ENCODE measurements at regions of chr6 and their contacts with region 1.

Region 1: DNA sequence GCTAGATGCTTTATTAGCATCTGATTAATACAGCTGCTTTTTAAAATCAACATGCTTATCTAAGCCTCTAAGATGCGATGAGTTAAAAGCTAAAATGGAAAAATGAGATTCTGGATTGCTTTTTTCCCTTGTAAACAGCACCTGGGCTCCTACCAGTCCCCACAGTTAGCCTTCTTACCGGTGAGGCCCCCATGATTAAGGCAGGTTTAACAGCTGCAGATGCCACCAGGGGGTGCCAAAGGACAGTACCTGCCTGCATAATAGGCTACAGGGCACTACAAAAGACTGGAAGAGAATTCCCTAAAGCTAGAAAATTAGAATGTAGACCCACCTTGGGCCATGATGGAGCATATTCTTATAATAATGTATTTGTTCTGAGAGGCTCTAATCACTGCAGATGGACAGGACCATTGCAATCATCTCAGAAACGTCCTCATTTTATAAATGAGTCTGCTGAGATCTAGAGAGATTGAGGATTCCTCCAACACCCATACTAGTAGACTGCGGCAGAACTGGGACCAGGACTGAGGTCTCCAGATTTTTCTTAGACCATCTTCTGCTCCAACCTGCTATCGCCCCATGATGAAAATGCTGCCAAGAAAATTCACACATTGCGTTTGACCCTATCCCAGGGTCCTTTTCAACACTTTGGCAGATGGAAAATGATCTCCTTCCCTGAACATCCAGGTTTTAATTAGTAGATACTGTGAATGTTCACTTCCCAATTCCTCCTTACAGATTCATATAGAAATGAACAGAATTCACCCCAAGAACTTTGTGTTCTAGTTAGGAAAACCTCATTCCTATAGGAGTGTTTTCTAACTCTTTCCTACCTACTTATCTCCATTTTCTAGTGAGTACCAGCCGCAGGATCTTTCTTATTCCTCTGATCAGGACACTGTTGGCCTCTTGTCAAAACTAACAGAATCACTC is 148.8 kb downstream of the RPS12 start:
- DNase-seq: no peak
- ATAC-seq: peak; percentile 97
- H3K4me3 ChIP-seq: no peak overlapping the region
- H3K27ac ChIP-seq: no peak overlapping the region
- H3K4me1 ChIP-seq: no peaks in the 10 kb centered on the region; the same call in 1 of the 2 replicates
- H3K27me3 ChIP-seq: no peaks in the 10 kb centered on the region
- CTCF ChIP-seq: peak; percentile 71 to 82 (median 73)
- EP300 ChIP-seq: no peak
- POLR2A ChIP-seq: no peak
- RAD21 ChIP-seq: peak; percentile 76

Region 2: GRCh38 chr6:132830334-132830751 is 132.9 kb before region 1 on chr6:
- CTCF ChIA-PET with region 1: interaction called, 44 read pairs
- POLR2A ChIA-PET with region 1: no interaction called
- RAD21 ChIA-PET with region 1: interaction called, 14 read pairs
- SMC1A ChIA-PET with region 1: interaction called, 15 read pairs
- in situ Hi-C with region 1: loop called (anchors 5 kb)
- intact Hi-C with region 1: loop called (anchors 1 kb)
- DNase-seq: no peak
- ATAC-seq: peak; percentile 55
- H3K4me3 ChIP-seq: no peak overlapping the region
- H3K27ac ChIP-seq: no peak overlapping the region
- H3K4me1 ChIP-seq: no peaks in the 10 kb centered on the region
- H3K27me3 ChIP-seq: no peaks in the 10 kb centered on the region
- CTCF ChIP-seq: peak; percentile 25 to 53 (median 32); a peak in 4 of 6 replicates
- EP300 ChIP-seq: no peak
- POLR2A ChIP-seq: no peak
- RAD21 ChIP-seq: peak; percentile 82

Region 3: GRCh38 chr6:132973514-132973993 is 10.4 kb after region 1 on chr6:
- CTCF ChIA-PET with region 1: interaction called, 24 read pairs
- POLR2A ChIA-PET with region 1: no interaction called
- RAD21 ChIA-PET with region 1: no interaction called
- SMC1A ChIA-PET with region 1: interaction called, 10 read pairs
- in situ Hi-C with region 1: no loop called
- intact Hi-C with region 1: no loop called
- DNase-seq: no peak
- ATAC-seq: no peak
- H3K4me3 ChIP-seq: no peak overlapping the region
- H3K27ac ChIP-seq: no peak overlapping the region
- H3K4me1 ChIP-seq: no peaks in the 10 kb centered on the region
- H3K27me3 ChIP-seq: no peaks in the 10 kb centered on the region
- CTCF ChIP-seq: no peak
- EP300 ChIP-seq: no peak
- POLR2A ChIP-seq: no peak
- RAD21 ChIP-seq: no peak

Region 4: GRCh38 chr6:132995432-132995831 is 32.2 kb after region 1 on chr6:
- CTCF ChIA-PET with region 1: no interaction called
- POLR2A ChIA-PET with region 1: no interaction called
- RAD21 ChIA-PET with region 1: no interaction called
- SMC1A ChIA-PET with region 1: no interaction called
- in situ Hi-C with region 1: no loop called
- intact Hi-C with region 1: no loop called
- DNase-seq: no peak
- ATAC-seq: no peak
- H3K4me3 ChIP-seq: no peak overlapping the region
- H3K27ac ChIP-seq: no peak overlapping the region
- H3K4me1 ChIP-seq: no peaks in the 10 kb centered on the region
- H3K27me3 ChIP-seq: no peaks in the 10 kb centered on the region; a peak in 1 of 4 replicates
- CTCF ChIP-seq: no peak
- EP300 ChIP-seq: no peak
- POLR2A ChIP-seq: no peak
- RAD21 ChIP-seq: no peak

Region 5: DNA sequence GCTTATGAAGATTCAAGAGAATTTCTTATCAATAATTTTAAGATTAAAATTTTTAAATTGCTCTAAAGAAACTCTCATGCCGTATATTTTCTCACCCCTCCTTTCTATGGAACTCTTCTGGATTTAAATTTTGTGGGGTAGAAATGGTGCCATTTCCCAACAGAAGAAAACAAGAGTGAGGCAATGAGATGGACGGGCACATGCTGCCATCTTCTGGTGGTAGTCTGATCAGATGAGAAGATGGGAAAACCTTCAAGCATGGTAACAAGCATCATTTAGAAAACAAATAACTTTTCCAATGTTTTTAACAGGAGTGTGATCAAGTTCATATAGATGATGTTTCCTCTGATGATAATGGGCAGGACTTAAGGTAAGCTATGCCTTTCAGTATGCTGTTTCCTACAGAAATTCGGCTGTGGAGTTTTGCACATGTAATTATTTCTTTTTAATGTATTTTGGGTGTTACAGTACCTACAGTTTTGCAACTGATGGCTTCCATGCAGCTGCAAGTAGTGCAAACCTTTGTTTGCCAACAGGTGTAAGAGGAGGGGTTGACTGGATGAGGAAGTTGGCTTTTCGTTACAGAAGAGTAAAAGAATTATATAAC is 549.3 kb after region 1 on chr6:
- CTCF ChIA-PET with region 1: interaction called, 6 read pairs
- POLR2A ChIA-PET with region 1: no interaction called
- RAD21 ChIA-PET with region 1: no interaction called
- SMC1A ChIA-PET with region 1: no interaction called
- in situ Hi-C with region 1: loop called (anchors 10 kb)
- intact Hi-C with region 1: loop called (anchors 2 kb)
- DNase-seq: no peak
- ATAC-seq: peak; percentile 60
- H3K4me3 ChIP-seq: no peak overlapping the region
- H3K27ac ChIP-seq: no peak overlapping the region
- H3K4me1 ChIP-seq: no peaks in the 10 kb centered on the region
- H3K27me3 ChIP-seq: no peaks in the 10 kb centered on the region
- CTCF ChIP-seq: peak; percentile 39 to 66 (median 51); a peak in 5 of 6 replicates
- EP300 ChIP-seq: no peak
- POLR2A ChIP-seq: no peak
- RAD21 ChIP-seq: peak; percentile 75

Region 6: DNA sequence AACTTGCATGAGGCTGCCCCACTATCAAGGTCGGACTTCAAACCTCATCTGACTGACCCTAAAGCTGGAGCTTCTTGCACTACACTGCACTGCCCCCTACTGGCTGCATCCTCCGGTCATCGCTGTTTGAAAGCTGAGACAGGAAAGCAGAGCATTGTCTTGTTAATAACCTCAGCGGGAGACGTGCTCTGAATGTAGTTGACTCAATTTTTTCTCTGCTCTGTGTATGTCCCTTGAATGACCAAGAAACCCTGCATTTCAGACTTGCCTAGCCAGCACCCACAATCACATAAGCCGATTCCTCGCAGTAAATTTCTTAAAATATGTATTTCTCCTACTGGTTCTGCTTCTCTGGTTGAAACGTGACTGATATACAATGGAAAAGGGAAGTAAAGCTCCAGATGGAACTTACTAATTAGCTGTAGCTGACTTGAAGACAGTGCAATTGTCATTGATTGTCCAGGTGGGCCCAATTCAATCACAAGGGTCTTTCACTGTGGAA is 953.5 kb after region 1 on chr6:
- CTCF ChIA-PET with region 1: interaction called, 16 read pairs
- POLR2A ChIA-PET with region 1: no interaction called
- RAD21 ChIA-PET with region 1: interaction called, 10 read pairs
- SMC1A ChIA-PET with region 1: interaction called, 3 read pairs
- in situ Hi-C with region 1: no loop called
- intact Hi-C with region 1: loop called (anchors 10 kb)
- DNase-seq: peak; percentile 35
- ATAC-seq: peak; percentile 88
- H3K4me3 ChIP-seq: no peak overlapping the region
- H3K27ac ChIP-seq: no peak overlapping the region
- H3K4me1 ChIP-seq: no peaks in the 10 kb centered on the region
- H3K27me3 ChIP-seq: no peaks in the 10 kb centered on the region
- CTCF ChIP-seq: peak; percentile 85 to 89 (median 88)
- EP300 ChIP-seq: no peak
- POLR2A ChIP-seq: no peak
- RAD21 ChIP-seq: peak; percentile 87